Heart left ventricle (tissue), 16 donors: ENCODE measurements at regions of chr12 and their contacts with region 1.

Region 1: DNA sequence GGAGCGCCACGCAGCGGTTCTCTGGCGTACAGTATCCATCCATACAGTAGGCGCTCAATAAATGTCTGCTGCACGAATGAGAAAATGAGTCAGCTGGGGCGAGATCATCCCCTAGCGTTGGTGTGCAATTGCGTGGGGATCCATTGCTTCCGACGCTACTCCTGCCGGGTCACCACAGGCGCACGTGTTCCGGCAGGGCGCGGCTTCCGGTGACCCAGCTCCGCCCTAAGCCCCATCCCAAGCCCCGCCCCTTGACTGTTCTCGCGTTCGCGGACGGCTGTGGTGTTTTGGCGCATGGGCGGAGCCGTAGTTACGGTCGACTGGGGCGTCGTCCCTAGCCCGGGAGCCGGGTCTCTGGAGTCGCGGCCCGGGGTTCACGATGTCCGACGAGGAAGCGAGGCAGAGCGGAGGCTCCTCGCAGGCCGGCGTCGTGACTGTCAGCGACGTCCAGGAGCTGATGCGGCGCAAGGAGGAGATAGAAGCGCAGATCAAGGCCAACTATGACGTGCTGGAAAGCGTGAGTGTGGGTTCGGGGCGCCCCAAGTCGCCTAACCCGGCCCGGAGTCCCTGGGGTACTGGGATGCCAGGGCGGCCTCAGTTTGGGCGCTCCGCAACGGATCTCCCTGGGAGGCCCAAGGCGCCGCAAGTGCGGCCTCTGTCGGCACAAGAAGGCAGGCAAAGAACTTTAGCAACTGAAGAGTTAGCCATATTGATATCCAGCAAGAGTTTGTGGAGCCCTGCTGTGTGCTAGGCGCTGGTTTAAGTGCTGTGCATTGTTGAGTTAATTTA is at the start of gene PSMD9:
- DNase-seq: peak; percentile 98 to 99 (median 98)
- ATAC-seq: peak; percentile 99 to 100 (median 99)
- H3K4me3 ChIP-seq: peak within 1 kb of the TSS; percentile 52 to 94 (median 84)
- H3K27ac ChIP-seq: peak within 1 kb of the TSS; percentile 87 to 98 (median 94)
- H3K4me1 ChIP-seq: peaks cover 3 to 33% (median 17%) of the 10 kb centered on the region in 12 donors
- H3K27me3 ChIP-seq: no peaks in the 10 kb centered on the region
- CTCF ChIP-seq: peak; percentile 42 to 81 (median 62)
- POLR2A ChIP-seq: peak in 1 of 2 donors; percentile 73
- total RNA-seq, gene PSMD9: 28.8 to 47.8 (median 37.9) TPM

Region 2: GRCh38 chr12:121688966-121689365 is 199.7 kb before region 1 on chr12:
- intact Hi-C with region 1: loop called in 4 of 10 experiments (anchors 5 to 10 kb)
- DNase-seq: no peak
- ATAC-seq: no peak
- H3K4me3 ChIP-seq: no peak overlapping the region
- H3K27ac ChIP-seq: no peak overlapping the region
- H3K4me1 ChIP-seq: peaks cover 0 to 14% (median 5%) of the 10 kb centered on the region in 12 donors
- H3K27me3 ChIP-seq: no peaks in the 10 kb centered on the region
- CTCF ChIP-seq: no peak
- POLR2A ChIP-seq: no peak

Region 3: DNA sequence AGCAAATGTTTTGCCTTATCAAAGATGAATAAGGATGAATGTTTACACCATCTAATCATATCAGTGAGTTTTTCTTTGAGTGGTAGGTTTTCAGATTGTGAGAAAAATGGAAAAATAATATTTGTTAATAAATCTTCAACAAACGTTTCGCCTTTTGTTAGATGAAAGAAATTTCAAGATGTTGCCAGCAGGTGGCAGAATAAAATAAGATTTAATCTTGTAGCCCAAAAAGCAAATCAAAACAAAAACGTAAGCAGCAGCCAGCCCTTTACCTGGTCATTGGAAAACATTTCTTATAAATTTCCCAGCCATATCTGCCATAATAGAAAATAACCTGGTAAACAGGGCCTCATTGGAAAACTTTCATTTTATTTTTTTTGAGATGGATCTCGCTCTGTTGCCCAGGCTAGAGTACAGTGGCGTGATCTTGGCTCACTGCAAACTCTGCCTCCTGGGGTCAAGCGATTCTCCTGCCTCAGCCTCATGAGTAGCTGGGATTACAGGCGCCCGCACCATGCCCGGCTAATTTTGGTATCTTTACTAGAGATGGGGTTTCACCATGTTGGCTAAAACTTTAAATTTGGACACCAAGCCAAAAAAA is 191.5 kb before region 1 on chr12:
- intact Hi-C with region 1: loop called in 6 of 10 experiments (anchors 5 to 10 kb)
- DNase-seq: no peak
- ATAC-seq: no peak
- H3K4me3 ChIP-seq: no peak overlapping the region
- H3K27ac ChIP-seq: no peak overlapping the region
- H3K4me1 ChIP-seq: peaks cover 0 to 5% (median 0%) of the 10 kb centered on the region in 12 donors
- H3K27me3 ChIP-seq: no peaks in the 10 kb centered on the region
- CTCF ChIP-seq: peak; percentile 41 to 70 (median 60)
- POLR2A ChIP-seq: no peak

Region 4: DNA sequence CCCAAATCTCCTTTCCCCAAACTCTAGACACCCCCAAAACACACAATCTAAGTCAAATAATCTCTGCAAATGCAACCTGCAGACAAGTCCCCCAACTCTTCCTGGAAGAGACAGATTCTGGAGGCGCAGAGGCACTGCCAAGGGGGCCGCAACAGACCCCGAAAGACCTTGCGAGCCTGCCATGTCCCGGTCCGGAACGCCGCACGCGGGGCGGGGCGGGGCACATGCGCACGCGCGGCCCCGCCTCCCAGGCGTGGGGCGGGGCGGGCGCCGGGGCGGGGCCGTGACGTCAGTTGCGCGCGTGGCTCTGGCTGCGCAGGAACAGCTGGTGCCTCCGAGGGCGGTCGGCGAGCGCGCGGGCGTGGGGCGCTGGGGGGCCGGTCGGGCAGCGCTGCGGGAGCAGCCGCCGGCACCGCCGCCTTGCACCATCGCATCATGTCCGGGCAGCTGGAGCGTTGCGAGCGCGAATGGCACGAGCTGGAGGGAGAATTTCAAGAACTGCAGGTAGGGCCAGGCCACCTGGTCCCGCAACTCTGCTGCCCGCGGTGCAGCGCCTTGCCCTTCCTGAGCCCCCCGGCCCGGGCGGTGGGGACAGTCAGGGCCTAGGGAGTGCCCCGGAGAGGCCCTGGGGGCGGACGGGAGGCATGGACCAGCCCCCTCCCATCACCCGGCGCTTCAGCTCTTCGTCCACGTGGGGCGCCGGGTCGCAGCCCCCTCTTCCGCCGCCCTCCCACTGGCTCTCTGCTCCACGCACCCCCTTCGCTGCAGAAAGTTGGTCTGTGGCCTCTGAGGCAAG is 176.0 kb before region 1 on chr12 and contains the start of gene TMEM120B:
- intact Hi-C with region 1: loop called in 2 of 10 experiments (anchors 5 to 10 kb)
- DNase-seq: peak; percentile 88 to 95 (median 90)
- ATAC-seq: peak; percentile 87 to 96 (median 94)
- H3K4me3 ChIP-seq: peak within 1 kb of the TSS; percentile 65 to 99 (median 96)
- H3K27ac ChIP-seq: peak within 1 kb of the TSS; percentile 83 to 97 (median 94)
- H3K4me1 ChIP-seq: peaks cover 0 to 29% (median 21%) of the 10 kb centered on the region in 12 donors
- H3K27me3 ChIP-seq: no peaks in the 10 kb centered on the region
- CTCF ChIP-seq: no peak
- POLR2A ChIP-seq: peak; percentile 71 to 86
- total RNA-seq, gene TMEM120B: 5.8 to 13.2 (median 7.6) TPM

Region 5: GRCh38 chr12:121793838-121794533 is 94.7 kb before region 1 on chr12:
- intact Hi-C with region 1: loop called in 9 of 10 experiments (anchors 1 to 5 kb)
- DNase-seq: peak; percentile 88 to 96 (median 94)
- ATAC-seq: peak; percentile 42 to 67 (median 62)
- H3K4me3 ChIP-seq: peak overlapping the region; percentile 37 to 75 (median 56)
- H3K27ac ChIP-seq: peak overlapping the region in 11 of 12 donors; percentile 61 to 100 (median 100)
- H3K4me1 ChIP-seq: peaks cover 17 to 88% (median 65%) of the 10 kb centered on the region in 12 donors
- H3K27me3 ChIP-seq: no peaks in the 10 kb centered on the region
- CTCF ChIP-seq: peak; percentile 98 to 100 (median 99)
- POLR2A ChIP-seq: no peak

Region 6: GRCh38 chr12:121811434-121812319 is 77.0 kb before region 1 on chr12:
- intact Hi-C with region 1: loop called in 3 of 10 experiments (anchors 2 to 5 kb)
- DNase-seq: peak; percentile 69 to 88 (median 76)
- ATAC-seq: peak in 3 of 4 donors; percentile 84 to 87 (median 87)
- H3K4me3 ChIP-seq: peak overlapping the region; percentile 20 to 76 (median 58)
- H3K27ac ChIP-seq: peak overlapping the region in 11 of 12 donors; percentile 23 to 82 (median 64)
- H3K4me1 ChIP-seq: peaks cover 3 to 54% (median 41%) of the 10 kb centered on the region in 12 donors
- H3K27me3 ChIP-seq: no peaks in the 10 kb centered on the region
- CTCF ChIP-seq: peak; percentile 97 to 100 (median 100)
- POLR2A ChIP-seq: no peak

Region 7: DNA sequence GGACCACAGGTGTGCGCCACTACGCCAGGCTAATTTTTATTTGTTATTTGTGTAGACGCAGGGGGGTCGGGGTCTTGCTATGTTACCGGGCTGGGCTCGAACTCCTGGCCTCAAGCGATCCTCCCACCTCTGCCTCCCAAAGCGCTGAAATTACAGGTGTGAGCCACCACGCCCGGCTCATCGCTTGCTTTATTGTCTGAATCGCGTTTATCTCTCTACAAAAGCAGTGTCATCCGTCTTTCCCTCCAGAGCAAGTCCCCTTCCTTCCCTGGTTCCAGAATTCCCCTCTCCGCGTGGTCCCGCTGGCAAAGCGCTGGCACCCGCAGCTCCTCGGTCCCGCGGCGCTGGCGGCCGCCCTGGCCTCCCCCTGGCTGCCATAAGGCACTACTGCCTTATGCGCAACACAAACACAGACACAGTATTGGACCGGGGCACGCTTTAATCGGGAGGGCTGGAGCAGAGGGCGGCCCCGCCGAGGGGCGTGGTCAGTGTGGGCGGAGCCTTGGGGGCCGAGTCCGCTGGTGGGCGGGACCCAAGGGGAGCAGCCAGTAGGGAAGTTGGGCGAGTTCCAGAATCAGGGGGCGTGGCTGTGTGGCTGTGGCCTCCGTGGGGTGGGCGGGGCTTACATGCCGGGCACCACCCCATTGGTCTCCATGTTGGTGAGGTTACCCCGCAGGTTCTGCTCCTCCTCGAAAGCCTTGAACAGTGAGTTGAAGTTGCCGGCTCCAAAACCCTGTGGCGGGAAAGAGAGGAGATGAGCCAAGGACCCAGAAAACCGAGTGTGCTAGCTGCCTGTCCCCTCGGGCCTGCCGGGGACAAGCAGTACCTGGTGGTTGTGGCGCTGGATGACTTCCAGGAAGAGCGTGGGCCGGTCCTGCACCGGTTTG is 49.3 kb before region 1 on chr12:
- intact Hi-C with region 1: loop called in 3 of 10 experiments (anchors 1 to 5 kb)
- DNase-seq: peak; percentile 99 to 100 (median 100)
- ATAC-seq: peak; percentile 97 to 100 (median 99)
- H3K4me3 ChIP-seq: peak overlapping the region; percentile 20 to 80 (median 66)
- H3K27ac ChIP-seq: peak overlapping the region in 11 of 12 donors; percentile 41 to 79 (median 63)
- H3K4me1 ChIP-seq: peaks cover 0 to 13% (median 5%) of the 10 kb centered on the region in 12 donors
- H3K27me3 ChIP-seq: no peaks in the 10 kb centered on the region
- CTCF ChIP-seq: peak in 11 of 12 donors; percentile 29 to 62 (median 48)
- POLR2A ChIP-seq: peak in 1 of 2 donors; percentile 78